ENCODE measurements at regions of chr4 and their contacts with region 1.

Region 1: GRCh38 chr4:149897783-149898182 is 82.1 kb upstream of the IQCM start:
- DNase-seq: no peak
- H3K4me3 ChIP-seq: no peak overlapping the region
- H3K27ac ChIP-seq: no peak overlapping the region
- H3K4me1 ChIP-seq: no peaks in the 10 kb centered on the region
- H3K27me3 ChIP-seq: no peaks in the 10 kb centered on the region
- CTCF ChIP-seq: peak; percentile 27 to 36 (median 29)
- EP300 ChIP-seq: no peak
- POLR2A ChIP-seq: no peak

Region 2: GRCh38 chr4:149370785-149371420 is 526.9 kb before region 1 on chr4:
- intact Hi-C with region 1: loop called (anchors 10 kb)
- DNase-seq: no peak
- H3K4me3 ChIP-seq: no peak overlapping the region
- H3K27ac ChIP-seq: no peak overlapping the region
- H3K4me1 ChIP-seq: no peaks in the 10 kb centered on the region
- H3K27me3 ChIP-seq: no peaks in the 10 kb centered on the region
- CTCF ChIP-seq: peak; percentile 27 to 48 (median 43)
- EP300 ChIP-seq: no peak
- POLR2A ChIP-seq: no peak

Region 3: GRCh38 chr4:149584722-149585121 is 313.1 kb before region 1 on chr4:
- intact Hi-C with region 1: no loop called
- DNase-seq: no peak
- H3K4me3 ChIP-seq: no peak overlapping the region
- H3K27ac ChIP-seq: no peak overlapping the region
- H3K4me1 ChIP-seq: no peaks in the 10 kb centered on the region
- H3K27me3 ChIP-seq: no peaks in the 10 kb centered on the region
- CTCF ChIP-seq: no peak
- EP300 ChIP-seq: no peak
- POLR2A ChIP-seq: no peak